Right ventricle myocardium superior (tissue), 1 donor: ENCODE measurements at regions of chr15 and their contacts with region 1.

Region 1: GRCh38 chr15:53378096-53378800 is 381.2 kb downstream of the WDR72 start:
- DNase-seq: no peak
- ATAC-seq: no peak

Region 2: DNA sequence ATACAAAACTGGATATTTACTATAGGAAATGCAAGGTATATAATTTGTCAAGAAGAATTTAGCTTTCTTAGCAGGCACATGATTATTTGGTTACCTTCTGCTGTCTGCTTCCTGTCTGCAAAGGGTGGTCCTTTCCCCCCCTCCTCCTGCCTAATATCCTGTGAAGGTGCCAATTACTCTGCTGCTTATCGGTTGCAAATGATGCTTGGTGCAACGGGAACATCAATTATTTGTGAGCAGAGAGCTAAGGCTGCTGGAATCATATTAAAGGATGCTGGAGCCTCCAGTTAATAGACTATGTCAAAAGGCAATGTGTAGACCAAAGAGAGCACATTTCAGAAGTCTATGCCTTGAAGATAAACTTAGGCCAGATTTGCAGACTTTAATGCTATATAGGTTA is 144.4 kb before region 1 on chr15:
- intact Hi-C with region 1: no loop called
- DNase-seq: no peak
- ATAC-seq: no peak

Region 3: DNA sequence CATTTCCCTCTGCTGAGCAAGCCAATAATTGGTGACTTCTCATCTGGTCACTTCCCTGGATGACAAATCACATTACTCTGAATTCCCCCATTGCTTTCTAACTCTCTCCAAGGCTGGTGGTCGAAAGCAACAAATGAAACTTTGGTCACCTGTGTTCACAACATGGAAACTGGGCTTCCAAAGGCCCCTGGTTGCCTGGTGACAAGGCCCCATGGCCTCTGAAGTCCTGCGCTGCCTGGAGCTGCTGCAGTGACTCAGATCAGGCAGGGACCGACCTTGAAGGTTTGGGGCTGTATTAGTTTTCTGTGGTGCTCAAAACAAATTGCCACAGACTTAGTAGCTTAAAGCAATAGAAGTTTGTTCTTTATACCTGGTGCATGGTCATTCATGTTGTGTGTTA is 35.9 kb after region 1 on chr15:
- intact Hi-C with region 1: loop called (anchors 5 kb)
- DNase-seq: no peak
- ATAC-seq: no peak